ENCODE measurements at regions of chr15 and their contacts with region 1.

Region 1: GRCh38 chr15:90233376-90234095 is at the start of gene CIB1:
- DNase-seq: peak; percentile 99
- H3K4me3 Mint-ChIP-seq: peak within 1 kb of the TSS; percentile 94
- H3K27ac Mint-ChIP-seq: peak within 1 kb of the TSS; percentile 92
- H3K4me1 Mint-ChIP-seq: peaks cover 54% of the 10 kb centered on the region
- H3K27me3 Mint-ChIP-seq: no peaks in the 10 kb centered on the region
- total RNA-seq, gene CIB1: 162 to 170 TPM

Region 2: DNA sequence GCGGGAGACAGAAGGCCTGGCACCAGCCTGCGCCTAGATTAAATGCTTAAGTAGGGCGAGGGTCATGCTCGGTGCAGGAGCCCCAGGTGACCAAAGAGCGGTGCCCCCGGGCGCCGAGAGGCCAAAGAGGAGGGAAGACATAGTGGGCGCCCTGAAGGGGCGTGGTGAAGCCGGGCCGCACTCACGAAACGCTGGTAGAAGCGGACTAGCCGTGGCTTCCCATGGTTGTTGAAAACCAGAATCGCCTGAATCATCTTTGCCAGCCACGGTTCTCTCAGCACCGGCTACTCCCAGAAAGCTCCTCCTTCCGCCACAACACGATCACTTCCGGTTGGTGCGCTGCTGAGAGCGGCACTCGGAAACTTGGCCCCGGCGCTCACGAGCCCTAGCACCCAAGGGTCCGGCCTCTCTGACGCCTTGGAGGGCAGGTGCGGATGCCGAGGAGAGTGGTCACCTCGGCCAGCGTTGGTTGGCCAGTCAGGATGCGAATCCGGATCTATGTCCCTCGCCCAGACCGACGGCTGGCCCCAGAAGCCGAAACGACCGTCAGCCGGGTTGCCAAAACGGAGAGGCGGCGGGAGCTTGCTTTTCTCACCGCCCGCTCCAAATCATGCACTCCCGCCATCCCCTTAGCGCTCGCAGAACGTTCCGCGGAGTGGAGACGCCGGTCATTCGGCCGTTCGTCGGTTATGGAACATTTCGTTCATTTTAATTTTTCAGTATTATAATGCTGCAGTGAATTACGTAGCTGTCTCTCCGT is 339.7 kb before region 1 on chr15 and contains the start of gene AP3S2:
- CTCF ChIA-PET with region 1: no interaction called
- POLR2A ChIA-PET with region 1: interaction called, 5 read pairs
- intact Hi-C with region 1: loop called (anchors 5 kb)
- DNase-seq: peak; percentile 95
- H3K4me3 Mint-ChIP-seq: peak within 1 kb of the TSS; percentile 95
- H3K27ac Mint-ChIP-seq: peak within 1 kb of the TSS; percentile 98
- H3K4me1 Mint-ChIP-seq: peaks cover 56% of the 10 kb centered on the region
- H3K27me3 Mint-ChIP-seq: no peaks in the 10 kb centered on the region
- total RNA-seq, gene AP3S2: 17.2 to 23.5 TPM

Region 3: DNA sequence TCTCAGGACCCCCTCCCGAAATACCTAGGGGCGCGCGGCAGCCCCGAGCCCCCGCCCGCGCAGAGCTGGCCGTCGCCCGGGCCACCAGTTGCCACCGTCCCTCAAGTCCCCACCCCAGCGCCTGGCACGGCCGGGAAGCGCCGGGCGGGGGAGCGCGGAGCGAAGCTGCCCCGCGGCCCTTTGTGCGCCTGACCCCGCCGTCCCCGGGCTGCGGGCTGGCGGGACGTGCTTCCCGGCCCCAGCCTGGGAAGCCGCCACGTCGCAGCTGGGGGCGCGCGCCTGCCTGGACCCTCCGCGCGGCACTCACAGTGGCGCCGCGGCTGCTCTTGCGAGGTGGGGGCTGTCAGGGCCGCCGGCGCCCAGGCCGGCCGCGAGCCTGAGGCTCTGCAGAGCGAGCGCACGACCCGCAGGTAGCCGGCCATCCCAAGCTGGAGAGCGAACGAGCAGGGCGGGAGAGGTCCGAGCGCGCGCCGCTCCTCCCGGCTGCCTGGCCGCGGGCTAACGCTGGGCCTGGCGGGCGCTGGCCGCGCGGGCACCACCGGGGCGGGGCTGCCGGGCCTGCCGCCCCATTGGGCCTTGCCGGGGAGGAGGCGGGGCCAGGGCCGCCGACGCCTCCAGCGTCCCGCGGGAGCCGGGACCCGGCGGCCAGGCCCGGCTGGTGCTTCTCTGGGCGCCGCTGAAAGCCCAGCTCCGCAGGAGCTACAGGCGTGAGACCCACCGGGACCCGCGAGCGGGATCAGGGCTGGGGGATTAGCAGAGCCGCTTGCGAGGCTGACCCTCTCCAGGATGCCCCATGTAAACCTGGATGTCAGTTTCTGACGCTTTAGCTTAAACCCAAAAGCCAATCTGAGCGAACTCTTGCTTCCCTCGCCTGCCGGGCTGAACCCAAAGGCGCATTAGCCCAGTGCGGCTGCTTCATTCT is 131.3 kb before region 1 on chr15 and contains the start of gene IDH2:
- CTCF ChIA-PET with region 1: interaction called, 7 read pairs
- POLR2A ChIA-PET with region 1: no interaction called
- intact Hi-C with region 1: loop called (anchors 1 kb)
- DNase-seq: peak; percentile 76
- H3K4me3 Mint-ChIP-seq: peak within 1 kb of the TSS; percentile 86
- H3K27ac Mint-ChIP-seq: peak within 1 kb of the TSS; percentile 67
- H3K4me1 Mint-ChIP-seq: peaks cover 50% of the 10 kb centered on the region
- H3K27me3 Mint-ChIP-seq: no peaks in the 10 kb centered on the region
- total RNA-seq, gene IDH2: 170 to 175 TPM

Region 4: DNA sequence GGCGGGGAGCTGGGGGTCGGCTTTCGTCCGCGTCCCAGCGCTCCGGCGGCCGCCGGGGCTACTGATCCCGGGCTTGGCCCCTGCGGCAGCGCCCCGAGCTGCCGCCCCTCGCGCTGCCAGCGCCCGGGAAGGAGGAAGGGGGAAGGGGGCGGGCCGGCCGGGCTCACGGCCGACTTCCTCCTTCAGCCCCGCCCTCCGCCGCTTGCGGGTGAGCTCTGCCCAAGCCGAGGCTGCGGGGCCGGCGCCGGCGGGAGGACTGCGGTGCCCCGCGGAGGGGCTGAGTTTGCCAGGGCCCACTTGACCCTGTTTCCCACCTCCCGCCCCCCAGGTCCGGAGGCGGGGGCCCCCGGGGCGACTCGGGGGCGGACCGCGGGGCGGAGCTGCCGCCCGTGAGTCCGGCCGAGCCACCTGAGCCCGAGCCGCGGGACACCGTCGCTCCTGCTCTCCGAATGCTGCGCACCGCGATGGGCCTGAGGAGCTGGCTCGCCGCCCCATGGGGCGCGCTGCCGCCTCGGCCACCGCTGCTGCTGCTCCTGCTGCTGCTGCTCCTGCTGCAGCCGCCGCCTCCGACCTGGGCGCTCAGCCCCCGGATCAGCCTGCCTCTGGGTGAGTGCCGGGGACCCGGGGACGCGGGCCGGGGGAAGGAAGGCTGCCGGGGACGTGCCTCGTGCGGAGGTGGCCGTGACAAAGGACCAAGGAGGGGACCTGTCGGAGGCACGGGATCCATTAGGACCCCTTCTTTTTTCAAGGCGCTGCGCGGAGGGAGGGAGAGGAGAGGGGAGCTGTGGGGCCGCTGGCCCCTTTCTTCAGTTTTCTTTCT is 32.2 kb before region 1 on chr15 and contains the start of gene SEMA4B:
- CTCF ChIA-PET with region 1: interaction called, 4 read pairs
- POLR2A ChIA-PET with region 1: interaction called, 23 read pairs
- intact Hi-C with region 1: no loop called
- DNase-seq: peak; percentile 77
- H3K4me3 Mint-ChIP-seq: peak within 1 kb of the TSS; percentile 76
- H3K27ac Mint-ChIP-seq: peak within 1 kb of the TSS; percentile 62
- H3K4me1 Mint-ChIP-seq: peaks cover 18% of the 10 kb centered on the region
- H3K27me3 Mint-ChIP-seq: no peaks in the 10 kb centered on the region
- total RNA-seq, gene SEMA4B: 13.1 to 16.7 TPM

Region 5: GRCh38 chr15:90243943-90244639 is 10.6 kb after region 1 on chr15:
- CTCF ChIA-PET with region 1: interaction called, 4 read pairs
- POLR2A ChIA-PET with region 1: interaction called, 16 read pairs
- intact Hi-C with region 1: no loop called
- DNase-seq: no peak
- H3K4me3 Mint-ChIP-seq: no peak overlapping the region
- H3K27ac Mint-ChIP-seq: no peak overlapping the region
- H3K4me1 Mint-ChIP-seq: peaks cover 13% of the 10 kb centered on the region
- H3K27me3 Mint-ChIP-seq: no peaks in the 10 kb centered on the region

Region 6: GRCh38 chr15:90265271-90266060 is 31.9 kb after region 1 on chr15 and contains the start of gene NGRN:
- CTCF ChIA-PET with region 1: interaction called, 3 read pairs
- POLR2A ChIA-PET with region 1: interaction called, 30 read pairs
- intact Hi-C with region 1: loop called (anchors 1 kb)
- DNase-seq: peak; percentile 96
- H3K4me3 Mint-ChIP-seq: peak within 1 kb of the TSS; percentile 92
- H3K27ac Mint-ChIP-seq: peak within 1 kb of the TSS; percentile 97
- H3K4me1 Mint-ChIP-seq: peaks cover 38% of the 10 kb centered on the region
- H3K27me3 Mint-ChIP-seq: no peaks in the 10 kb centered on the region
- total RNA-seq, gene NGRN: 25.3 to 28.6 TPM

Region 7: DNA sequence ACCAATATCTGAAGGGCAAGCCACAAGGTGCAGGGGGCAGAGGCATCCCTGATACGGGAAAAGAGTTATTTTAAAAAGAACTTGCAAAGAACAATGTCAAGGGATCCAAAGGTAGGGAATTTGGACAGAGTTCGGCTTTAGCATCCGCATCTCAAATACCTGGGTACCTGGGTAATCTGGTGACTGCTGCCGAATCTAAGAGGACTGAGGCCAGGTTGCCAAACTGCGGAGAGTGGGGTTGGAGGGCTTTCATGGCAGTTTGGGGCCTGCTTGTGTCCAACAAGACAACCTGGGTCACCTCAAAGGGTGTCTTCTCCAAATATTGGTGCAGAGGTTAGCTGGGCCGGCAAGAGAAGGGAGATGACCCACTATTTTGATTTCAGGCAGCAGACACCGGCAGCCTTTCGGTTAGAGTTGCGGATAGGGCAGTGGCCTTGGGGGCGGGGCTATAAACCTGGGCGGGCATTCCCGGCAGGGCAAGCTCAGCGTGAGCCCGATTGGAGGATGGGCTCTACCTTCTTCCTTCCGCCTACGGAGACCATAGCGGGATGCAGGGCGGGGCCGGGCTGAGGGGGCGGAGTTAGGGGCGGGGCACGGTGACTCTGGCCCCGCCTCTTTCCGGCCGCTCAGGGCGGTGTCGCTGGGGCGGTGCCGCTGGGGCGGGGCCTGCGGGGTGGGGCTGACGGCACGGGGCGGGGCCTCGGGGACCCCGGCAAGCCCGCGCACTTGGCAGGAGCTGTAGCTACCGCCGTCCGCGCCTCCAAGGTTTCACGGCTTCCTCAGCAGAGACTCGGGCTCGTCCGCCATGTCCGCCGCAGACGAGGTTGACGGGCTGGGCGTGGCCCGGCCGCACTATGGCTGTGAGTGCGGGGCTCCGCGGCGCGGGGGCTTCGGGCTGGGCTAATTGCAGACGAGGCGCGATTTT is 154.3 kb after region 1 on chr15 and contains the start of gene IQGAP1:
- CTCF ChIA-PET with region 1: no interaction called
- POLR2A ChIA-PET with region 1: no interaction called
- intact Hi-C with region 1: loop called (anchors 5 kb)
- DNase-seq: peak; percentile 98
- H3K4me3 Mint-ChIP-seq: peak within 1 kb of the TSS; percentile 92
- H3K27ac Mint-ChIP-seq: peak within 1 kb of the TSS; percentile 91
- H3K4me1 Mint-ChIP-seq: peaks cover 46% of the 10 kb centered on the region
- H3K27me3 Mint-ChIP-seq: no peaks in the 10 kb centered on the region
- total RNA-seq, gene IQGAP1: 186 to 207 TPM

Region 8: DNA sequence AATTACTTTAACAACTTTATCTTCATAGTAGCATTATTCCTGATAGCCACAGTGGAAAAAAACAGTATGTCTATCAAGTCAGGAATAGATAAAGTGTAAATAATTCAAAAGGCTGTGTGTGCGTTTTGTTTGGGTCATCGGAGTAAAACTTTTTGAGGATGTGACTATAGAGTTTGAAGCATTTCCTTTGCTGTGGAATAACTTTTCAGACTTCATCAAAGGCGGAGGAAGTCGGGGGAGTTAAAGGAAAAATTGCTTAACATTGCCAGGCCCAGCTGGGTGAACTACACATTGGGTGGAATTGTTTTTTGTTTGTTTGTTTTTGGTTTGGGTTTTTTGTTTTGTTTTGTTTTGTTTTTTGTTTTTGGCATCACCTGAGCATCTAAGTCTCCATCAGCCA is 225.8 kb after region 1 on chr15:
- CTCF ChIA-PET with region 1: no interaction called
- POLR2A ChIA-PET with region 1: no interaction called
- intact Hi-C with region 1: no loop called
- DNase-seq: no peak
- H3K4me3 Mint-ChIP-seq: no peak overlapping the region
- H3K27ac Mint-ChIP-seq: no peak overlapping the region
- H3K4me1 Mint-ChIP-seq: peaks cover 22% of the 10 kb centered on the region
- H3K27me3 Mint-ChIP-seq: no peaks in the 10 kb centered on the region

Measured in activated CD4-positive, alpha-beta memory T cell treated with anti-CD3 and anti-CD28 coated beads for 36 hours (primary cell).